Activated naive CD4-positive, alpha-beta T cell treated with anti-CD3 and anti-CD28 coated beads, Interleukin-2, amount 10 ng/mL, durations not matched to agents 7 days and 5 days (primary cell): ENCODE measurements at regions of chr10 and their contacts with region 1.

Region 1: GRCh38 chr10:103685880-103686669 is 169.3 kb downstream of the SH3PXD2A start:
- DNase-seq: peak; percentile 85
- H3K4me3 Mint-ChIP-seq: no peak overlapping the region
- H3K27ac Mint-ChIP-seq: no peak overlapping the region
- H3K4me1 Mint-ChIP-seq: peaks cover 12% of the 10 kb centered on the region
- H3K27me3 Mint-ChIP-seq: peaks cover 11% of the 10 kb centered on the region

Region 2: GRCh38 chr10:103589074-103589630 is 96.9 kb before region 1 on chr10:
- CTCF ChIA-PET with region 1: interaction called, 12 read pairs
- DNase-seq: no peak
- H3K4me3 Mint-ChIP-seq: no peak overlapping the region
- H3K27ac Mint-ChIP-seq: no peak overlapping the region
- H3K4me1 Mint-ChIP-seq: peaks cover 16% of the 10 kb centered on the region
- H3K27me3 Mint-ChIP-seq: peaks cover 10% of the 10 kb centered on the region

Region 3: DNA sequence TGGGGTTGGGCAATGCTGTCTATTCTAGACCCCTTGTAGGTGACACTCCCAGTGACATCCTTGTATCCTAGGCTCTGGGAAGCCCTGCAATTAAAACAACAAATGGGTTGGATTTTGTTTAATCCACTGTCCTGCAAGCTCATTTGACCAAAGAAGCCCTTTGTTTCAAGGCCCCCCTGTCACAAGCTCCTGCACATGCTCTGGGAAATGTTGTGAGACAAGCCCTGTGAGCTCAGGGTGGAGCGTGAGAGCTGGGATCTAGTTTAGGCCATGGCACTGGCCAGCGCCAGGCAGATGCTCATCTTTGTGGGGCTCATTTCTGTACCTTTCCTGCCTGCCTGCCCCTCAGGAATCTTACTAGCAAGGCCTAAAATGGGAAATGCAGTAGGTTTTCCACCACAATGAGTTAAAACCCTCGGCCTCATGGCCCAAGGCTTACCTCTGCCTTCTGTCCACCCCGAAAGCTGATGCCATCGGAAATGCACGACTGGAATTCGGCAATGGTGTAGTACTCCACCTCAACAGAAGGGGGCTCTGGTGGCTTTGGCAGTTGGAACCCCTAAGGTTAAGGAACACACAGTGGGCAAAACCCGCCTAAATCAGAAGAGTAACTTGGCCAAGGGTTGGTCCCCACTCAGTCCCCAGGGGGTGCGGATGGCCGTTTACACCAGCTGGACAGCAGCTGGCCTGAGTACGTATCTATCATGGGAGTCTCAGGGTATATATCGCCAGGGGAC is 80.5 kb before region 1 on chr10:
- CTCF ChIA-PET with region 1: interaction called, 43 read pairs
- DNase-seq: peak; percentile 64
- H3K4me3 Mint-ChIP-seq: no peak overlapping the region
- H3K27ac Mint-ChIP-seq: no peak overlapping the region
- H3K4me1 Mint-ChIP-seq: no peaks in the 10 kb centered on the region
- H3K27me3 Mint-ChIP-seq: no peaks in the 10 kb centered on the region

Region 4: GRCh38 chr10:103659674-103660363 is 26.3 kb before region 1 on chr10:
- CTCF ChIA-PET with region 1: interaction called, 17 read pairs
- DNase-seq: peak; percentile 82
- H3K4me3 Mint-ChIP-seq: peak overlapping the region; percentile 87
- H3K27ac Mint-ChIP-seq: peak overlapping the region; percentile 89
- H3K4me1 Mint-ChIP-seq: peaks cover 21% of the 10 kb centered on the region
- H3K27me3 Mint-ChIP-seq: no peaks in the 10 kb centered on the region

Region 5: GRCh38 chr10:103671122-103671895 is 14.8 kb before region 1 on chr10:
- CTCF ChIA-PET with region 1: interaction called, 18 read pairs
- DNase-seq: no peak
- H3K4me3 Mint-ChIP-seq: no peak overlapping the region
- H3K27ac Mint-ChIP-seq: no peak overlapping the region
- H3K4me1 Mint-ChIP-seq: peaks cover 12% of the 10 kb centered on the region
- H3K27me3 Mint-ChIP-seq: no peaks in the 10 kb centered on the region